Activated CD4-positive, alpha-beta memory T cell treated with anti-CD3 and anti-CD28 coated beads for 36 hours (primary cell): ENCODE measurements at regions of chr11 and their contacts with region 1.

Region 1: GRCh38 chr11:65593518-65594298 is 1.9 kb downstream of the KCNK7 start:
- DNase-seq: peak; percentile 50
- H3K4me3 Mint-ChIP-seq: no peak overlapping the region
- H3K27ac Mint-ChIP-seq: peak overlapping the region; percentile 42
- H3K4me1 Mint-ChIP-seq: peaks cover 13% of the 10 kb centered on the region
- H3K27me3 Mint-ChIP-seq: no peaks in the 10 kb centered on the region

Region 2: DNA sequence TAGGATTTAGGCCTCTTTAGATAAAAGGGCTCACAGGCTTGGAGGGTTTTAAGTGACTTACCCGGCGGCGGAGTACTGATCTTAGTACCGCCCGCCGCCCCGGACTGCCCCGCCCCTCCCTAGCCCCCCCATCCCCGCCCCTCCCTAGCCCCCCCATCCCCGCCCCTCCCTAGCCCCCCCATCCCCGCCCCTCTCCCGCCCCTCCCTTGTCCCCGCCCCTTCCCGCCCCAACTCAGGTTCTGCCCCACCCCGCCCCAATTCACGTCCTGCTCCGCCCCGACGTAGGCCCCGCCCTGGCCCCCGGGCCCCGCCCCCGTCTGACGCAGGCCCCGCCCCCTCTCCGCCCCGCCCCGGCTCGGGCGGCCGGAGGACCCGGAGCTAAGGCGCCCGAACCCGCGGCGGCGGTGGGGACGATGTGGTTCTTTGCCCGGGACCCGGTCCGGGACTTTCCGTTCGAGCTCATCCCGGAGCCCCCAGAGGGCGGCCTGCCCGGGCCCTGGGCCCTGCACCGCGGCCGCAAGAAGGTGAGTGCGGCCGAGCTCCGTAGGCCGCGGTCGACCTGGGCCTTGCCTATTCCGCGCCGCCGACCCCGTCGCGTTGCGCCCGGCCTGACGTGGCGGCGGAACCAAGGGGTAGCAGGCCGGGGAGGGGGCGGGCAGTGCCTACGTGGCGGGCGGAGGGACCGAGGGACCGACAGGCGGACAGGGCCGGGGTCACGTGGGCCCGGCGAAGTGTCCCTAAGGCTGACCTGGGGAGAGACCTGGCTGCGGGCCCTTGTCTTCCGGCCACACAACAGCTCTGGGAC is 68.8 kb before region 1 on chr11 and contains the start of gene SCYL1:
- CTCF ChIA-PET with region 1: no interaction called
- POLR2A ChIA-PET with region 1: no interaction called
- intact Hi-C with region 1: no loop called
- DNase-seq: peak; percentile 90
- H3K4me3 Mint-ChIP-seq: peak within 1 kb of the TSS; percentile 84
- H3K27ac Mint-ChIP-seq: peak within 1 kb of the TSS; percentile 84
- H3K4me1 Mint-ChIP-seq: peaks cover 57% of the 10 kb centered on the region
- H3K27me3 Mint-ChIP-seq: no peaks in the 10 kb centered on the region
- total RNA-seq, gene SCYL1: 67.8 to 69.8 TPM

Region 3: DNA sequence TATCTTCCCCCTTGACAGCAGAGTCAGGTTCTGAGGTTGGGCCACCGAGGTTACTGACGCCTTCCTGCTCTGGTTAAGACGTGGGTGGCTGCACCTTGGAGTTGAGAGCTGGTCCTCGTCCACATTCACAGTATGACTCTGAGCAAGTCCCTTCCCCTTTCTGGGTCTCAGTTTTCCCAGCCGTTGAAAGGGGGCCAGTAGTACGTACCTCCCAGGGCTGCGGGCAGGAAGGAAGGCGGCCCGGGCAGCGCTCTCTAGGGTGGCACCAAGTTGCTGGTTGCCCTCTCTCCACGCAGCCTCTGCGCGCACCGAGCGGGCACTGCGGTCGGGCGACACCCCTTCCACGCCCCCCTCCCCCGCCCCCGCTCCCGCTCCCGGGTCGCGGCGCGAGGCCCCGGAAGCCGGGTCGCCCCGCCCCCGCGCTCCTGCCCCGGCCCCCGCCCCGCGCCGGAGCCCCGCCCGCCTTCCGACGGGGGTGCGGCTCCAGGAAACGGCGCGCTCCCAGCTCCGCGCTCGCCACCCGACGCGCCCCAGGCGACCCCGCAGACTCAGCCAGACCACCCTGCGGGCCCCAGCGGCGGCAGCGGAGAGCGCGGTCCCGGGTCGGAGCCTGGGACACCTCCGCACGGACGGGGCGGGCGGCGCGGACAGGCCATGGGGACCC is 18.0 kb before region 1 on chr11 and contains the start of gene EHBP1L1:
- CTCF ChIA-PET with region 1: interaction called, 126 read pairs
- POLR2A ChIA-PET with region 1: interaction called, 68 read pairs
- intact Hi-C with region 1: loop called (anchors 1 kb)
- DNase-seq: peak; percentile 87
- H3K4me3 Mint-ChIP-seq: peak within 1 kb of the TSS; percentile 90
- H3K27ac Mint-ChIP-seq: peak within 1 kb of the TSS; percentile 93
- H3K4me1 Mint-ChIP-seq: peaks cover 47% of the 10 kb centered on the region
- H3K27me3 Mint-ChIP-seq: no peaks in the 10 kb centered on the region
- total RNA-seq, gene EHBP1L1: 137 to 141 TPM